Aorta (tissue), 5 donors: ENCODE measurements at regions of chr1 and their contacts with region 1.

Region 1: DNA sequence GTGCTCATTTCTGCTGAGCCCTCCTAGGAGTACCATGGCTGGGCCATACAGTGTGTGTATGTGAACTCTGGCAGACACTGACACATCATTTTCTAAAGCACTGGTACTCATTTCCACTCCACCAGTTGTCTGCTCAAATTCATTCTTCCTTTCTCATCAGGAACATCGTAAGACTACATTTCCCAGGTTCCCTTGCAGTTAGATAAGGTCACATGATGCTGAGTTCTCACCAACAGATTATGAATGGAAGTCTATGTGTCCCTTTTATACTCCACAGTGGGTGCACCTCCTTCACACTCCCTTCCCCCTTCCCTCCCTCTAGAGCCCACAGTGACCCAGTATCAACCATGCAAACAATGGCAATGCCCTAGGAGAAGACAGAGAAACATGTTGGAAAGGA is 38.3 kb upstream of the PAX7 start:
- DNase-seq: no peak
- ATAC-seq: no peak
- H3K4me3 ChIP-seq: no peak overlapping the region
- H3K27ac ChIP-seq: no peak overlapping the region
- H3K4me1 ChIP-seq: no peaks in the 10 kb centered on the region
- H3K27me3 ChIP-seq: peaks cover 0 to 1% of the 10 kb centered on the region in 2 donors

Region 2: DNA sequence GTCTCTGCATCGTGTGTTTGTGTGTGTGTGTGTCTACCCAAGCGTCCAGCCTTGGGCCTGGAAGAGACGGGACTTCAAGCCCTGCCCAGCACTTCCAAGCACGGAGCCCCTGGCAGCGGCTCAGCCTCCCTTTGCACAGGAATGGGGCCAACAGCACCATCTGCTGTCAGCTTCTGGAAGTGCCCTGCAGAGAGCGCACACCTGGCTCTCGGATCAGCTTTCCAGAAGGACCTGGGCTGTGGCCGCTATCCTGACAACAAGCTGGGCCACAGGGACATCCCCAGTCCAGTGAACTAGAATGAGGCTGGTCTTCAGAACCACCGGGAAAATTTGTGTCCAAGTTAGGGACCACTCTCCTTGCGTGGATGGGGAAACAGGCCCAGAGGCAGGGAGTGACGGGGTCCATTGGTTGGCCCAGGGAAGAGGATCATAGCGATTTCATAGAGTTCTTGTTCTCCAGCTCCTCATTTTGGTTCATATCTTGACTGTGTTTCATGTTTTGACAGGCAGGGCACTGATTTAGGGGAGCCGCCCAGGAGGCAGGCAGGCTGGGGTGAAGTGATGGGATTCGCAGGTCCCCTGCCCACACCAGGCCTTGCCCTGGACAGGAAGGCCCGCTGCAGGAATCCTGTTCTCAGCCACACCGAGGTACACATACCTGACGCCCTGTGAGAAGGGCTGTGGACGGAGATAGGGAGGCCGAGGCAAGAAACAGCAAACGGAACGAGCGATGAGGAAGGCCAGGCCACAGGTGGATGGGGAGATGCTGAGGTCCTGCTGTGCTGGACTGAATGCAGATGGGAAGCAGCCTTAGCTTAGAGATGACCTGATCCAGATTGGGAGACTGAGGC is 228.6 kb after region 1 on chr1:
- intact Hi-C with region 1: loop called (anchors 1 to 5 kb)
- DNase-seq: peak; percentile 69 to 88
- ATAC-seq: peak; percentile 70
- H3K4me3 ChIP-seq: no peak overlapping the region
- H3K27ac ChIP-seq: no peak overlapping the region
- H3K4me1 ChIP-seq: no peaks in the 10 kb centered on the region
- H3K27me3 ChIP-seq: no peaks in the 10 kb centered on the region